A673 (cell line): ENCODE measurements at regions of chr3 and their contacts with region 1.

Region 1: DNA sequence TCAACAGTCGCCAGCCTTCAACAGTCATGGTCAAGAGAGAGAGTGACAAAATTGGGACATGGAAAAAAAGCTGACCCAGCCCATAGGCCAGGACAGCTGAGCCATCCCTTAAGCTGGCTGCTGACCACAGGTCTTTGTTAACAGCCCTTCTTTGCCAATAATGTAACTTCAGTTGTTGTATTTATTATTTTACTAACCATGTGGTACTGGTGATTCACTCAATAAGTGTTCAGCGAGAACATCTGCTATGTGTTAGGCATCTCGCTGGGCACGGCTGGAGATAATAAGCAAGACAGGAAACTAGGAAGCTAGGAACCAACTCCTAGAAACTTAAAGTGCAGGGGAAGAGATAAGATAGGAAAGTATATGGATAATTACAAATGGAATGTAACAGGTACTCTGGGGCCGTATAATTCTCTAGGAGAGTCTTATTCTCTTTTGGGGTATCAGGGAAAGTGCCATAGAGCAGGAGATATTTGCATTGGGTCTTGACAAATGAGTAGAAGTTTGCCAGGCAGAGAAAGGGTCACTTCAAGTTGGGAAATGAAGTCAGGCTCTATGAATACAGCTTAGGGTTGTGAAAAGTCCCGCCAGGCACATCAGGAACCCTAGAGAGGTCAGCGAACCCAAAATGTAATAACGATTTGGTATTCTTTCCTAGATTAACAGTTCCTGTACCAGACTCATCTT is 84.0 kb upstream of the TRA2B start:
- DNase-seq: peak; percentile 91
- H3K4me3 ChIP-seq: no peak overlapping the region
- H3K27ac ChIP-seq: peak overlapping the region; percentile 49
- H3K4me1 ChIP-seq: peaks cover 11% of the 10 kb centered on the region
- H3K27me3 ChIP-seq: no peaks in the 10 kb centered on the region
- CTCF ChIP-seq: no peak

Region 2: DNA sequence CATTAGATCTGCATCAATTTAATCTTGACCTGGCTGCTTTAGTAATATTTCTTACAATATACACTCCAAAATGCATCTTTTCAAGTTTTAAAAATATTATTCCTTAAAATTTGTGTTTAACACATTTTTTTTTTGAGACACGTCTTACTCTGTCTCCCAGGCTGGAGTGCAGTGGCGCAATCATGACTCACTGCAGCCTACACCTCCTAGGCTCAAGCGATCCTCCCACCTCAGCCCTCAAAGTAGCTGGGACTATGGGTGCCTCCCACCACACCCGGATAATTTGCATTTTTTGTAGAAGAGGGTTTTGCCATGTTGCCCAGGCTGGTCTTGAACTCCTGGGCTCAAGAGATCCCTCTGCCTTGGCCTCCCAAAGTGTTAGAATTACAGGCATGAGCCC is 13.5 kb after region 1 on chr3:
- CTCF ChIA-PET with region 1: no interaction called
- POLR2A ChIA-PET with region 1: interaction called, 10 read pairs
- intact Hi-C with region 1: no loop called
- DNase-seq: no peak
- H3K4me3 ChIP-seq: no peak overlapping the region
- H3K27ac ChIP-seq: no peak overlapping the region
- H3K4me1 ChIP-seq: no peaks in the 10 kb centered on the region
- H3K27me3 ChIP-seq: no peaks in the 10 kb centered on the region
- CTCF ChIP-seq: no peak

Region 3: GRCh38 chr3:186097663-186098451 is 76.0 kb after region 1 on chr3:
- CTCF ChIA-PET with region 1: no interaction called
- POLR2A ChIA-PET with region 1: interaction called, 5 read pairs
- intact Hi-C with region 1: loop called (anchors 2 kb)
- DNase-seq: peak; percentile 99
- H3K4me3 ChIP-seq: peak overlapping the region; percentile 38
- H3K27ac ChIP-seq: peak overlapping the region; percentile 67
- H3K4me1 ChIP-seq: peaks cover 65% of the 10 kb centered on the region
- H3K27me3 ChIP-seq: no peaks in the 10 kb centered on the region
- CTCF ChIP-seq: no peak

Region 4: DNA sequence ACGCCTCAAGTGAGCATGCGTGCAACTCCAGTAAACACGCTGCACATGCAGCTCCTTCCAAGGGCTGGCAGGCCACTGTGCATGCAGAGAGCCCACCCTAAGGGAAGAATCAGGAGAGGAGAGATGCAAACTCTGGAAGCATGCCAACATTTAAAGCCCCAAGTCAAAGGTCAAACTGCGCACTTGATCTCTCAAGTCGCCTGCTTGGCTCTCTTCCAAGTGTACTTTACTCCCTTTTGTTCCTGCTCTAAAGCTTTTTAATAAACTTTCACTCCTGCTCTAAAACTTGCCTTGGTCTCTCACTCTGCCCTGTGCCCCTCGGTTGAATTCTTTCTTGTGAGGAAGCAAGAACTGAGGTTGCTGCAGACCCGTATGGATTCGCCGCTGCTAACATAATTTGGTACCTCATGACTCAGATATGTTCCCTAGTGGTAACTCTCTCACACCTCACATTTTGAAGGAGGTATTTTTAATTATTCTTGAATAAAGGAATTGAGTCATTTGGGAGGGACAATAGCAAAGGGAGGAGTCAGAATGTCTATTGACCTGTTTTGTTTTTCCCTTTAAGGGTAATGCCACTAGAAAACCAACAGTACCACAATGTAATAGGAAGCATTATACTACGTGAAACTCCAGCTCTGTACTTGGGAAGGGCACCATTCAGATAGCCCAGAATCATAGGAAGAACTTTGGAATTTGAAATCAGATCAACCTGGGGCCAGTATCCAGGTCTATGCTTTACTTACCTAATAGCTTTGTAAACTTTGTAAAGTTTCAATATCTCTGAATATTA is 359.8 kb after region 1 on chr3:
- CTCF ChIA-PET with region 1: no interaction called
- POLR2A ChIA-PET with region 1: no interaction called
- intact Hi-C with region 1: no loop called
- DNase-seq: no peak
- H3K4me3 ChIP-seq: no peak overlapping the region
- H3K27ac ChIP-seq: no peak overlapping the region
- H3K4me1 ChIP-seq: no peaks in the 10 kb centered on the region
- H3K27me3 ChIP-seq: no peaks in the 10 kb centered on the region
- CTCF ChIP-seq: no peak